ENCODE measurements at regions of chr5 and their contacts with region 1.

Region 1: GRCh38 chr5:64229163-64229774 is 63.6 kb downstream of the RNF180 start:
- DNase-seq: no peak
- ATAC-seq: no peak
- H3K4me3 Mint-ChIP-seq: no peak overlapping the region
- H3K27ac Mint-ChIP-seq: no peak overlapping the region
- H3K4me1 Mint-ChIP-seq: no peaks in the 10 kb centered on the region
- H3K27me3 Mint-ChIP-seq: no peaks in the 10 kb centered on the region

Region 2: DNA sequence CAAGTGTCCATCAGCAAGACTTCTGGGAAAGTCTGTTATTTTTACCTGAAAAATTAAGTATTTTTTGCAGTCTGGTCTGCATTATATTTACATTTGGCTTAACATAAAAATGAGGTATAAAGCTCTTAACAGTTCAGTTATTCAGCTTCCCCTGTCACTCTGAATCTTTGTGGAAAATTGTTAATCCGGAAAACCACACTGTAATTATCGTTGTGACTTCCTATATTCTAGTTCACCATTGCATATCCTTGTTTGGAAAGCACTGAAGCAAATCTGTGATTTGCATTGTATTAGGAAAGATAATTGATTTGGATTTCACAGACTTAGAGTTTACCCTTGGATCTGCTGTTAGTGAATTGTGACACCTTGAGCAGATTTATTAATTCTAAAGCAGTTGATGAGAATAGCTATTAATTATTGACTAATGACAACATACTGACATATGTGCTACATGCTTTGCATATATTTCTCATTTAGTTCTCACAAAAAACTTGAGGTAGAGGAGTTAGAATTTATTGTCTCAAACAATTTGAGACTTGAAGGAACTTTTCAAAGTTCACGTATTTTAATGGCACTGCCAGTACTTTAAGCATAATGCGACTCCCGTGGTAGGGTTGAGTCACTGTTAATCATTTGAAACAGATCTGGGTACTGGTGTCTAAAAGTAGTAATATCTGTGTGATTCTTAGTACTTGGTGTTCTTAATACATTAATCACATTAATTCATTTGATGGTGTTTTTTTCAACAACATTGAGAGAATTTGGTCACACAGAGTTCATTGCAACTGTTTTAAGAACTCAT is 1722.4 kb before region 1 on chr5:
- CTCF ChIA-PET with region 1: no interaction called
- POLR2A ChIA-PET with region 1: no interaction called
- intact Hi-C with region 1: no loop called
- DNase-seq: no peak
- ATAC-seq: no peak
- H3K4me3 Mint-ChIP-seq: no peak overlapping the region
- H3K27ac Mint-ChIP-seq: no peak overlapping the region
- H3K4me1 Mint-ChIP-seq: no peaks in the 10 kb centered on the region
- H3K27me3 Mint-ChIP-seq: no peaks in the 10 kb centered on the region

Region 3: GRCh38 chr5:64213531-64213930 is 15.7 kb before region 1 on chr5:
- CTCF ChIA-PET with region 1: interaction called, 3 read pairs
- POLR2A ChIA-PET with region 1: interaction called, 13 read pairs
- intact Hi-C with region 1: no loop called
- DNase-seq: no peak
- ATAC-seq: no peak
- H3K4me3 Mint-ChIP-seq: no peak overlapping the region
- H3K27ac Mint-ChIP-seq: no peak overlapping the region
- H3K4me1 Mint-ChIP-seq: no peaks in the 10 kb centered on the region
- H3K27me3 Mint-ChIP-seq: peaks cover 2% of the 10 kb centered on the region